Activated T-helper 2 cell treated with anti-CD3 and anti-CD28 coated beads, Interferon-gamma antibody, Interleukin-2, Interleukin-4, amounts not matched to agents 10 μg/mL and 5 μg/mL and 100 μg/mL, durations not matched to agents 14 hours and 24 hours and 36 hours (primary cell): ENCODE measurements at regions of chr11 and their contacts with region 1.

Region 1: DNA sequence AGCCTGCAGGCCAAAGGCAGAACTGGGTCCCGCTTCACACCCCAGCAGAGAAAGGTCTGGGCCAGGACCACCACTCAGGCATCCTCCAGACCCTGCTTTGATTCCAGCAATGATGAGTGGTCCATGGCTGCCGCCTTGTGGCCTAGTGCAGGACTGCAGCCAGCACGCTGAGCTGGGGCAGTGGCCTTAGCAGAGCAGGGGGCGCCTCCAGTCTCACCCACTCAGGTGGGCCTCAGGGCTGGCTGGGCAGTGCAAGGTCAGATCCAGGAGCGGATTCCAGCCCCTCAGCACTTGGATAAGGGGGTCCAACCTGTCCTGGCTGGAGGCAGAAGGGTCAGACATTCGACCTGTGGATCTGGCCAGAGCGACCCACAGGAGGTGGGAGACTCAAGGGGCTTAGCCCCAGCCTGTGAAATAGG is 9.6 kb upstream of the PDE2A start:
- DNase-seq: peak; percentile 63
- H3K4me3 Mint-ChIP-seq: no peak overlapping the region
- H3K27ac Mint-ChIP-seq: no peak overlapping the region
- H3K4me1 Mint-ChIP-seq: peaks cover 22% of the 10 kb centered on the region
- H3K27me3 Mint-ChIP-seq: peaks cover 6% of the 10 kb centered on the region

Region 2: DNA sequence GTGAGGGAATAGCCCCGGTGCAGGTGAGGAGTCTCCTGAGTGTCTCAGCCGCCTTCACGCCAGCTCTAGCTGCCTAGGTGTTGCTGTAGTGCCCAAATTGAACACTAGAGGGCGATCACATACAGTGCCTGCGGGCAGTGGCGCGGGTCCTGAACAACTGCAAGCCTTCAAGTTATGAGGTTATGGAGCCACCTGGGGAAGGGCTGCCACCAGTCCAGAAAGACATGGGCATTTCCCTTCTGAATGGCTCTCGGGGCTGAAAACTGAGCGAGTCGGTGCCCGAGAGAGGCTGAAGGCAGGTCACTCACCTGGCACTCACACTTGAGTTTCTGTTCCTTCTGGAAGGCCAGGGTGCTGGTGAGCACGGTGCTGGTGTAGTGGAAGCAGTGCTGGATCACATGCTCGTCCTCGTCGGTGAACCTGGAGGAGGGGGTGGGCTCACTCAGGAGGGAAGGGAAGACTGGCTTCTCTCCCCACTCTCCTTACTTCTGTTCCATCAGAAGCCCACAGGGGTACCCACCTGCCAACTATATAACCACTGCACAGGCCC is 98.0 kb before region 1 on chr11:
- intact Hi-C with region 1: loop called (anchors 2 kb)
- DNase-seq: peak; percentile 55
- H3K4me3 Mint-ChIP-seq: peak overlapping the region; percentile 40
- H3K27ac Mint-ChIP-seq: no peak overlapping the region
- H3K4me1 Mint-ChIP-seq: peaks cover 18% of the 10 kb centered on the region
- H3K27me3 Mint-ChIP-seq: peaks cover 51% of the 10 kb centered on the region

Region 3: GRCh38 chr11:72668611-72669347 is 15.0 kb before region 1 on chr11:
- intact Hi-C with region 1: loop called (anchors 1 kb)
- DNase-seq: peak; percentile 59
- H3K4me3 Mint-ChIP-seq: no peak overlapping the region
- H3K27ac Mint-ChIP-seq: no peak overlapping the region
- H3K4me1 Mint-ChIP-seq: peaks cover 15% of the 10 kb centered on the region
- H3K27me3 Mint-ChIP-seq: peaks cover 30% of the 10 kb centered on the region

Region 4: DNA sequence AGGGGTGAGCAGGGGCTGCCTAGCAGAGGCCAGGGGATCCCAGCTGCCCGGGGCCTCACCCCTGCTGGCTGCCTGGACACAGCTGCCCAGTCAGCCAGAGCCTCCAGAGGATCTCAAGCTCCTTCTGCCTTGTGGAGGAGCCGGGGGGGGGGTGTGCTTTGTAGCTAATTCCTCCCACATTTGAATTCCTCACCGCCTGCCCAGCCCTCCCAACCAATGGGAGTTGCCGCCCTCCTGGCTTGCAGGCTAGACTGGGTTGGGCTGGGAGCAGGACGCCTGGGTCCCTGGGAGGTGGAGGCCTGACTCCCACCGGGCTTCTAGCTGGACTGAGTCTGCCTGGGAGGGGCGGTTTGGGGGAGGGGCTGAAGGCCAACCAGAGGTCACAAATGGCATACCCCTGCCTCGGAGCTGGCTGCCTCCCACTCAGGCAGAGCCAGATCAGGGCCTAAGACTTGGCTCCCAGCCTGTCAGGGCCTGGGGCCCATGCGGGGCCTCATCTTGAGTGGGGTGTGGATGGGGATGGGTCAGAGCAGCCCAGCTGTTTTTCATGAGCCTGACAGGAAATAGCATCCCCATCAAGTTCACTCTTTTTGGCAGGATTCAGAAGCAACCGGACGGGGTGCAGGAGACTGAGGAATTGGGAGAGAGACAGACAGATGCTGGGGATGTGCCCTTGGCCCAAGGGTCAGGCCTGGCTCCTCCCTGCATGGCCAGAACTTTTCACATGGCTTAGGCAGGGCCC is 19.6 kb after region 1 on chr11:
- intact Hi-C with region 1: no loop called
- DNase-seq: no peak
- H3K4me3 Mint-ChIP-seq: no peak overlapping the region
- H3K27ac Mint-ChIP-seq: no peak overlapping the region
- H3K4me1 Mint-ChIP-seq: no peaks in the 10 kb centered on the region
- H3K27me3 Mint-ChIP-seq: no peaks in the 10 kb centered on the region

Region 5: GRCh38 chr11:72752088-72752914 is 68.5 kb after region 1 on chr11 and contains the start of gene ARAP1:
- intact Hi-C with region 1: no loop called
- DNase-seq: peak; percentile 62
- H3K4me3 Mint-ChIP-seq: peak within 1 kb of the TSS; percentile 96
- H3K27ac Mint-ChIP-seq: peak within 1 kb of the TSS; percentile 97
- H3K4me1 Mint-ChIP-seq: peaks cover 20% of the 10 kb centered on the region
- H3K27me3 Mint-ChIP-seq: no peaks in the 10 kb centered on the region
- total RNA-seq, gene ARAP1: 95.2 and 96.2 TPM in 2 replicates